Right ventricle myocardium inferior (tissue), 1 donor: ENCODE measurements at regions of chrX and their contacts with region 1.

Region 1: GRCh38 chrX:49230469-49231232 is 2.5 kb downstream of the CACNA1F start:
- DNase-seq: peak; percentile 86
- ATAC-seq: peak; percentile 62

Region 2: DNA sequence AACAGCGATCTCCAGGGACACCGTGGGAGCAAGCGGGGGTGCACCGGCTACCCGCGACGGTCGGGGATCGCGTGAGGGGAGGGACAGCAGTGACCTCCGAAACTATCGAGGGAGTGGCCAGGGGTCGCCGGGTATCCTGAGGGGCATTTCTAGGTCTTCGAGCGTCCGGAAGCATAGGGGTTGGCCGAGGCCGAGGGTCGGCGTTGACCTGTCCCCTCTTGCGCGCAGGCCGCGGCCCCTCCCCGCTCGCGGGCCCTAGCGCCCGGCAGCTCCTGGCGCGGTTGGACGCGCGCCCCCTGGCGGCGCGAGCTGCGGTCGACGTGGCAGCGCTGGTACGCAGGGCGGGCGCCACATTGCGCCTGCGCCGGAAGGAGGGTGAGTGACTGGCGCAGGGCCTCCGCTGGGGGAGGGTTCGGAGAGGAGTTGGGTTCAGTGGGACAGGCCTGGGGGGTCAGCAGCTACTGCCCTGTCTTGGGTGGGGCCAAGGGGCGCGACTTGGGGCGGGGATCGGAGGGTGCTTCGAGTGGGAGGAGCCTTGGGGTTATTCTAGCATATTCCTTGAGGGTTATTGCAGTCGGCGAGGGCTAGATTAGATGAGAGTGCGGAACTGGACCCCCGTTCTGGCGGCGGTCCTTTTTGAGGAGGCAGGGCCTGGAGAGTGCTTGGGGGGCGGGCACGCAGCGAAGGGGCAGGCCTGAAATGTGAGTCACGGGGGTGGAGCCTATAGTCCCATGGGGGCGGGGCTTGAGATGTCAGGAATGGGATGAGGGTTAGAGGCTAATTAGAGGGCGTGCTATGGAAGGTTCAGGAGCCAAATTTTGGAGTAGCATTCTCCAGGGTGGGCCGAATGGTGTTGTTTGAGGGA is 66.9 kb before region 1 on chrX:
- intact Hi-C with region 1: loop called (anchors 2 kb)
- DNase-seq: peak; percentile 95
- ATAC-seq: peak; percentile 72

Region 3: GRCh38 chrX:49199906-49200771 is 30.5 kb before region 1 on chrX and contains the start of gene SYP:
- intact Hi-C with region 1: loop called (anchors 5 kb)
- DNase-seq: peak; percentile 92
- ATAC-seq: peak; percentile 97
- total RNA-seq, gene SYP: 1.8 TPM

Region 4: GRCh38 chrX:49269010-49269767 is 38.5 kb after region 1 on chrX:
- intact Hi-C with region 1: loop called (anchors 2 kb)
- DNase-seq: peak; percentile 98
- ATAC-seq: peak; percentile 96

Region 5: DNA sequence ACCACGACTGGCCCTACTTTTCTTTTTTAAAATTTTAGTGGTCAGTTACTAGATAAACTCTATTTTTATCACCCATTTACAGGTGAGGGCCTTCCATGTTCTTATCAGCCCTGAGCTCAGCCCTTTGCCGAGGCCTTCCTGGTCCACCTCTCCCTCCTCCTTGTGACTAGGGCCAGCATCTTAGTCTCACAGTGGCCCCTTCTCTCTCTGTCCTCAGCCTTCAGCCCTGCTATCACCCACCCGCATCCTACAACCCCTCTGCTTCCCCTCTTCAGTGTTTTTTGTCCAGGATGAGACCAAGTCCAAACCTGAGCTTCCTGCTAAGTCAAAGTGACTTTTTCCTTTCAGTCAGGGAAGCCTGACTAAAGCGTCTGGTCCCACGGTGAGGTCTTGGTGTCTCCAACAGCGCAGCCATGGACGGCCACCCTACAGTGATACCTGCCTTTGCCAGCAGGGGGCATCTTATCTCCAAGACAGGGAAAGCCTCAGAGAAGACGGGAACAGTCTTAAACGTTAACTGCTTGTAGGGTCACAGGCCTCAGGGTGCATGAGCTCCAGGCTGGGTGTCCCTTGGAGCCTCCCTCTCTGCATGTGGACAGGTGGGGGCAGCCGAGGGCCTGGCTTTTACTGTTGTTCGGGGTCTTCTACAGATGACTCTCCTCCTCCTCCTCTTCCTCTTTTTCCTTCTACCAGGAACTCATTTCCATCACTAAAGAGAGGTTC is 61.1 kb after region 1 on chrX:
- intact Hi-C with region 1: no loop called
- DNase-seq: no peak
- ATAC-seq: peak; percentile 57